ENCODE measurements at regions of chr20 and their contacts with region 1.

Region 1: DNA sequence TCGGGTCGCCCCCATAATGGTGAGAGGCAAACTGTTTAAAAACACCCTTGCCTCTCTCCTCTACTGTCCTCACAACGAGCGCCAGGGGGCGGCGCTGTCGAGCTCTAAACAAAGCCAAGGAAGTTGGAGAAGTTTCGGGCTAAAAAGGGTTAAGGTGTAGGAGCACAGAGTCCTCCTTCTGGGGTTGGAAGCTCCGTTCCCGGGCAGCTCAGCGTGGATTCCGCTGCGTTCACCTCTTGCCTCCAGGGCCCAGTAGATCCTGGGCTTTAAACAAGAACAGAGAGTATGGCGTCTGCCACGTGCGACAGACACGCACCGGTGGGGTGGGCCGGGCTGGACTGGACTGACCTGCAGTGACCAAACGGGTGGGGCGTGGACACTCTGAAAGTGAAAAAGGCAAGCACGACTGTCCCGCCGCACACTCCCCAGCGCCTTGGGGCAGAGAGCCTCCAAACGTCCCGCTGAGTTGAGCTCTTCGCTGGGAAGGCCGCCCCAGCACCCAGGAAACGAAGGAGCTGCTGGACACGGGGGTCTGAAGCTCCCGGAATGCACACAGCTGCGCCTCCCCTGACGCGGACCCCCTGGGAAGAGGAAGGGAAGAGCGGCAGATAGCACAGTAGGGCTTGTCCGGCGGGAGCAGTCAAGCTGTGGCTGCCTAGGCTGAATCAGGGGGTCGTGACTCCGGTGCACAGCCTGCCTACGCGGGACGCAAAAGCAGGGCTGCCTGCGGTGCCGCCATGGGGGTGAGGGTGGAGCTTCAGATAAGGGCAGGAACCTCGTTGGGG is 1.6 kb upstream of the THBD start:
- DNase-seq: peak; percentile 63 to 82 (median 67)
- H3K4me3 ChIP-seq: peak overlapping the region in 2 of 4 donors; percentile 9 to 56
- H3K27ac ChIP-seq: peak overlapping the region in 4 of 5 donors; percentile 36 to 86 (median 58)
- H3K4me1 ChIP-seq: peaks cover 24 to 45% of the 10 kb centered on the region in 2 donors
- H3K27me3 ChIP-seq: peaks cover 14% of the 10 kb centered on the region
- CTCF ChIP-seq: peak; percentile 35 to 68 (median 59)
- POLR2A ChIP-seq: no peak

Region 2: GRCh38 chr20:23235173-23236027 is 184.4 kb after region 1 on chr20:
- intact Hi-C with region 1: loop called in 1 of 2 experiments (anchors 10 kb)
- DNase-seq: peak; percentile 51 to 75 (median 55)
- H3K4me3 ChIP-seq: no peak overlapping the region
- H3K27ac ChIP-seq: no peak overlapping the region
- H3K4me1 ChIP-seq: no peaks in the 10 kb centered on the region
- H3K27me3 ChIP-seq: no peaks in the 10 kb centered on the region
- CTCF ChIP-seq: peak; percentile 53 to 75 (median 64)
- POLR2A ChIP-seq: no peak

Region 3: DNA sequence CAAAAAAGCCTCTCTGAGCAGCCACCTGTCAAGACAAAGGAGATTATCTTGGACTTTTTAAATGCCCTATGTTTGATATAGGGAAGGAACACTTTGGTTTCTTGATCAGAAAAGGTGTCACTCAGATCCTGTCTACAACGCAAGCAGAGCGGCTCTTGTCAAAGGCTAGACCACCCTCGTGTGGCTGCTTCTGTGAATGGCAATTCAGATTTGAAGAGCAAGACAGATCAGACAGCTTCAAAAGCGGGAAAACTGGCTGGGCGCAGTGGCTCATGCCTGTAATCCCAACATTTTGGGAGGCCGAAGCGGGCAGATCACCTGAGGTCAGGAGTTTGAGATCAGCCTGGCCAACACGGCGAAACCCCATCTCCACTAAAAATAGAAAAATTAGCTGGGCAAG is 289.5 kb after region 1 on chr20:
- intact Hi-C with region 1: no loop called
- DNase-seq: peak in 6 of 7 donors; percentile 43 to 87 (median 60)
- H3K4me3 ChIP-seq: no peak overlapping the region
- H3K27ac ChIP-seq: no peak overlapping the region
- H3K4me1 ChIP-seq: no peaks in the 10 kb centered on the region
- H3K27me3 ChIP-seq: no peaks in the 10 kb centered on the region
- CTCF ChIP-seq: peak; percentile 21 to 73 (median 56)
- POLR2A ChIP-seq: no peak

Measured in adrenal gland (tissue), 19 donors.